Esophagus squamous epithelium (tissue), 5 donors: ENCODE measurements at regions of chr5 and their contacts with region 1.

Region 1: DNA sequence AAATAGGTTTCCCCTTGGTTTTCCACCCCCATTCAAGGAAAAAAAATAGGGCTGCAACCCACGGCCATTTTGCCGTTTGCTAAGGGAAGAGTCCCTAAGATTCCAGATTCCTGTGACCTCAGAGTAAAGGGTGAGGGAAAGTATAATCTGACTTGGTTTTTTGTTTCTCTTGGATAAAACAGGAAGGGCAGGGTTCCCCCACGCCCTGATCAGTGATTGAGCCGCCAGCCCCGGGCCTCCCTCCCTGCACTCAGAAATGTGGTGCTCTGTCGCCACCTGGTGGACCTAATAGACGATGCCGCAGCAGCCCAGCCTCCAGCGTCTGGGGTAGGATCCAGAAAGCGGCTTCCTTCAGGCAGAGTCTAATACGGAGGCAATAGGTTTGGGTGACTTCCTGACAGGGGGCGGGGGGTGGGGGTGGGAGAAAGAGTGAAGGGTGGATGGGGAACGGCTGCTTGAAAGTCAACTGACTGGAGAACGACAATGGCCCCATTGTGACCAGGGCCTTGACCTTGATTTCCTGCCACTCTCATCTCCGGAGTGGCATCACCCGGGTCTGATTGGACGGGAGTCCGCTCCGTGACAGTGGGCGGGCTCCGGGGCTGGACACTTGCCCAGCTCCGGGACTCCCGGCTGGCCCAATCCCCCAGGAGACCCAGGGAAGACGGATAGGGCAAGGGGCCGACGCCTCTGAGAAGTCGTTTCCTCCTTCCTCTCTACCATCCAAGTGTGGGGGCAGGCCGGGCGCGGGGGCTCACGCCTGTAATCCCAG is 17.8 kb upstream of the CYSTM1 start:
- DNase-seq: peak; percentile 49
- H3K4me3 ChIP-seq: peak overlapping the region in 3 of 4 donors; percentile 24 to 59 (median 40)
- H3K27ac ChIP-seq: peak overlapping the region in 3 of 4 donors; percentile 41 to 55 (median 46)
- H3K4me1 ChIP-seq: peaks cover 8 to 13% (median 10%) of the 10 kb centered on the region in 3 donors
- H3K27me3 ChIP-seq: no peaks in the 10 kb centered on the region
- CTCF ChIP-seq: peak; percentile 88 to 95 (median 94)
- POLR2A ChIP-seq: no peak

Region 2: DNA sequence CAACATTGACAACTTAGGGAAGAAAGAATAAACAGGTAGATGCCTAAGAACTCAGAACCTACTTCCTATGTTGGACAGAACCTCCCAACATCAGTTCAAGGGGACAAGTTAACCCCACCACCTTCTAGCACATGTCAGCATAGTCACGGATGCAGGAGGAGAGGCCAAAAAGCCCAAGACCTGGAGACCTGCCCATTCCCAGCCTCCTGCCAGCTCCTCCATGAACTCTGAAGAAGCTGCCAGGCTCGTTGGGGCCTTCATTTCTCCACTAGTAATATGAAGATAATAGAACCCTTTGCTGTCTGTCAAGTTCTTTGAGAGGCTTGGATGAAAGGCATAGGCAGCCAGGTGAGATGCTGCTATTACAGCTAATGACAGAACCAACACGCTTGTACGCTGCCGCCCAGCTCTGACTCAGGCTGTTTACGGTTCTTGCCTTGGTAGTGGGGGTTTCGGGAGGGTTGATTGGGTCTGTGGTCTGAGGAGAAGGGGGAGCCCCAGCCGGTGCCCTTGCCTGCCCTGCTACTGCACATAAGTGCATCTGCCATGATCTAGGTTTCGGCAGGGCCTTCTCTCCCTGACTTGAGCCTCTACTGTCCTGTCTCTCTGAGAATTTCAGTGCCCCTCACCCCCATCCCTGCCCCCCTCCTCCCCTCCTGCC is 196.4 kb before region 1 on chr5:
- intact Hi-C with region 1: no loop called
- DNase-seq: no peak
- H3K4me3 ChIP-seq: no peak overlapping the region
- H3K27ac ChIP-seq: no peak overlapping the region
- H3K4me1 ChIP-seq: no peaks in the 10 kb centered on the region
- H3K27me3 ChIP-seq: no peaks in the 10 kb centered on the region
- CTCF ChIP-seq: no peak
- POLR2A ChIP-seq: no peak

Region 3: GRCh38 chr5:140073296-140073695 is 83.9 kb before region 1 on chr5:
- intact Hi-C with region 1: loop called (anchors 5 kb)
- DNase-seq: no peak
- H3K4me3 ChIP-seq: no peak overlapping the region
- H3K27ac ChIP-seq: no peak overlapping the region
- H3K4me1 ChIP-seq: peaks cover 0 to 3% (median 0%) of the 10 kb centered on the region in 3 donors
- H3K27me3 ChIP-seq: peaks cover 0 to 8% (median 0%) of the 10 kb centered on the region in 4 donors
- CTCF ChIP-seq: peak in 5 of 6 experiments; percentile 34 to 76 (median 71)
- POLR2A ChIP-seq: no peak

Region 4: DNA sequence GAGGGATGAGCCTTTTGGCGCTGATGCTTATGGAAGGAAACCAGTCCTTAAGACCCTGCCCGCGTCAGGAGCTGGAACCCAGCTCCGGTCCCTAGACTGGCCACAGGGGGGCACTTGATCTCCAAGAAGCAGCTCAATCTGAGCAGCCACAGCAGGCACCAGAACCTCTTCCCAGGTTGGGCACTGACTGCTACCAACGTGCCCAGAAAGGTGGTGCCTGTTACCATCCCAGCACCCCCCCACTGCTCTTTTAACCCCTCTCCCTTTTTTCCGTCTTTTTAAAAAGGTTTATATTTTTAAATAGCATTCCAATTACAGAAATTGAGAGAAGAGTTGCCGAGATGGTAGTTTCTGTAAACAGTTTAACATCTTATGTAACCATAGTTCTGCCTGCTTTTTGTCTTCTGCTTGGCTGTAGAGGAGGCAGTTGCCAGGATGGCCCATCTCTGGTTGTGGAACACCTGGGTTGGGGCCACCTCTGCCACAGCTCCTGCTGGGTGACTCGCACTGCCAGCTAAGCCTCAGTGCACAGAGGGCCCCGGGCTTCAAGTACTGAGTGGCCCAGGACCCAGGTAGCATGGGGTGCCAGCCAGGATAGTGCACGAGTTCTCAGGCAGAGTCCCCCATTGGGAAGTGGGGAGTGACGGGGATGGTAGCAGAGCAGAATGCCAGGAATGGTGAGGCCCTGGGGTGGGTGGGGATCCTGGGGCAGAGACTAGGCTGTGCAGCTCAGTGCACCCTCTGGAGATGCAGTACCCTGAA is 82.9 kb after region 1 on chr5:
- intact Hi-C with region 1: no loop called
- DNase-seq: no peak
- H3K4me3 ChIP-seq: no peak overlapping the region
- H3K27ac ChIP-seq: peak overlapping the region in 3 of 4 donors; percentile 65 to 78 (median 77)
- H3K4me1 ChIP-seq: peaks cover 28 to 88% (median 53%) of the 10 kb centered on the region in 3 donors
- H3K27me3 ChIP-seq: no peaks in the 10 kb centered on the region
- CTCF ChIP-seq: peak in 5 of 6 experiments; percentile 32 to 73 (median 57)
- POLR2A ChIP-seq: no peak

Region 5: GRCh38 chr5:140261403-140262171 is 104.4 kb after region 1 on chr5:
- intact Hi-C with region 1: no loop called
- DNase-seq: no peak
- H3K4me3 ChIP-seq: no peak overlapping the region
- H3K27ac ChIP-seq: peak overlapping the region; percentile 28 to 65 (median 48)
- H3K4me1 ChIP-seq: peaks cover 10 to 29% (median 15%) of the 10 kb centered on the region in 3 donors
- H3K27me3 ChIP-seq: no peaks in the 10 kb centered on the region
- CTCF ChIP-seq: no peak
- POLR2A ChIP-seq: no peak